ENCODE measurements at regions of chr7 and their contacts with region 1.

Region 1: DNA sequence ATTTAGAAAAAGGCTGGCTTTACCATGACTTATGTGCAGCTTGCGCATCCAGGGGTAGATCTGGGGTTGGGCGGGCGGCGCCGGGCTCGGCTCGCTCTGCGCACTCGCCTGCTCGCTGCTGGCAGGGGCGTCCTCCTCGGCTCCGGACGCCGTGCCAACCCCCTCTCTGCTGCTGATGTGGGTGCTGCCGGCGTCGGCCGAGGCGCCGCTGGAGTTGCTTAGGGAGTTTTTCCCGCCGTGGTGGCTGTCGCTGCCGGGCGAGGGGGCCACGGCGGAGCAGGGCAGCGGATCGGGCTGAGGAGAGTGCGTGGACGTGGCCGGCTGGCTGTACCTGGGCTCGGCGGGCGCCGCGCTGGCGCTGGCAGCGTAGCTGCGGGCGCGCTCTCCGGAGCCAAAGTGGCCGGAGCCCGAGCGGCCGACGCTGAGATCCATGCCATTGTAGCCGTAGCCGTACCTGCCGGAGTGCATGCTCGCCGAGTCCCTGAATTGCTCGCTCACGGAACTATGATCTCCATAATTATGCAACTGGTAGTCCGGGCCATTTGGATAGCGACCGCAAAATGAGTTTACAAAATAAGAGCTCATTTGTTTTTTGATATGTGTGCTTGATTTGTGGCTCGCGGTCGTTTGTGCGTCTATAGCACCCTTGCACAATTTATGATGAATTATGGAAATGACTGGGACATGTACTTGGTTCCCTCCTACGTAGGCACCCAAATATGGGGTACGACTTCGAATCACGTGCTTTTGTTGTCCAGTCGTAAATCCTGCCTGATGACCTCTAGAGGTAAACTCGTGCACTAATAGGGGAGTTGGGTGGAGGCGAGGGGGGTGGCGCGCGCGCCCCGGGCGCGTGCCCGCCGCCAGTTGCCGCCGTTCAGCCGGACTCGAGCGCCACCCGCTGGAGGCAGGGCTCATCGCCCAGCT is at the start of gene HOXA5:
- DNase-seq: peak; percentile 90
- H3K4me3 ChIP-seq: peak within 1 kb of the TSS; percentile 30 to 60 (median 55)
- H3K27ac ChIP-seq: peak within 1 kb of the TSS; percentile 82 to 99 (median 92)
- H3K4me1 ChIP-seq: peaks cover 0 to 43% (median 27%) of the 10 kb centered on the region in 4 donors
- H3K27me3 ChIP-seq: no peaks in the 10 kb centered on the region
- CTCF ChIP-seq: peak; percentile 62 to 75 (median 68)
- EP300 ChIP-seq: peak in 2 of 4 donors; percentile 67 to 86
- POLR2A ChIP-seq: peak; percentile 28 to 60
- total RNA-seq, gene HOXA5: 9.2 to 12.2 (median 11.2) TPM

Region 2: DNA sequence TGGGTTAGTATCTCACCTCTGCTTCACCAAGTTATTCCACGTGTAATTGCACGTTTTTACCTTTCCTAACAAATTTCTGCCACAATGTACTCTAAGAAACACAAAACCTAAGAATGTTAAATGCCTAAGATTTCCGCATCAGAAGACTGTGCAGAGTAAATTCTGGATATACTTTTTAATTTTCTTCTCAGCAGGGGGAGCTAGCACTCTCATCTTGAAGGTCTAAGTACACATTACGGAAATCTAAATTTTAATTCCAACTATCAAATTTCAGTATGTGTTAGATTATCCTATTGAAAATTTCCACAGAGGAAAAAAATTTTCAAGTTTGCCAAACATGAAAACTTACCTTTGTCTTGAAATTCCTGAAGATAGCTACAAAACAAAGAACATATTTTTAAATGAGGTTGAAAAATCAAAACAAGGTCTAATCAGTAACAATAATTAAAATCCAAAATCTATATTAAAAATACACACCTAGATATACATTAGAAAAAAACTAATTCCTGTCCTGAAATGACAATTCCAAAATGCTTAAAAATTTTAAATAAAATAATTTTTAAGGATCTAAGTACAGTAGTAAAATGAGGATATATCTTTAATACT is 289.4 kb before region 1 on chr7:
- intact Hi-C with region 1: loop called (anchors 2 kb)
- DNase-seq: no peak
- H3K4me3 ChIP-seq: no peak overlapping the region
- H3K27ac ChIP-seq: no peak overlapping the region
- H3K4me1 ChIP-seq: no peaks in the 10 kb centered on the region
- H3K27me3 ChIP-seq: no peaks in the 10 kb centered on the region
- CTCF ChIP-seq: peak in 3 of 4 experiments; percentile 52 to 61 (median 57)
- EP300 ChIP-seq: no peak
- POLR2A ChIP-seq: no peak

Measured in sigmoid colon (tissue), 7 donors.